ENCODE measurements at regions of chr22 and their contacts with region 1.

Region 1: DNA sequence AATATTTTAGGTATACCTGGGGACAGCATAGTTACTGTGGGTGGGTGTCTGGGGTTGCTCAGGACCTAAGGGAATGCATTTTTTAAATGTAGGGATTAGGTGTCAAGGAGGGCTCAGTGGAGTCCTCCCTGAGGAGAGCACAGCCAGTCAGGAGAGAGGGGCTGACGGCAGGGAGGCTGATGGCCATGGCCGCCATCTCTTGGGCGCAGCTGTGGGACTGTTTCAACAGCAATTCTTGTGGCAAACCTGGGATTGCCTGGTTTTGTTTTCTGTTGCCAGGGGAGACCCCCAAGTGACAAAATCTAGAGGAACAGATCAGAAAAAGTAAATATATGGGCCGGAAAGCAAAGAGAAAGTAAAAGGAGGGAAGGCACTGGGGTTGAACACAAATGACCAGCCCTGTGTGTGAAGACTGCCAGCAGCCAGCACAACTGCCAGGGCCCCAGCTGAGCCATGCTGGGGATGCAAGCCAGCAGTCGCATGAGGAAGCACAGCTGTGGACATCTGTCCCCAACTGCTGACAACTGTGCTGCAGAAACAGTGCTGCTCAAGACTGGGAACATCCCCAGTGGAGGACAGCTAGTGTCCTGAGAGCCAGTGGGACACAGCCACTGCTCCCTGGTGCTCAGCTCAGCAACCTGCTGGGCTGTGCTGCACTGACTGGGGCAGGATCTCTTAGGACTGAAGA is 10.5 kb downstream of the MIF start:
- DNase-seq: no peak
- H3K4me3 ChIP-seq: no peak overlapping the region
- H3K27ac ChIP-seq: no peak overlapping the region
- H3K4me1 ChIP-seq: peaks cover 17% of the 10 kb centered on the region
- H3K27me3 ChIP-seq: no peaks in the 10 kb centered on the region
- CTCF ChIP-seq: no peak

Region 2: DNA sequence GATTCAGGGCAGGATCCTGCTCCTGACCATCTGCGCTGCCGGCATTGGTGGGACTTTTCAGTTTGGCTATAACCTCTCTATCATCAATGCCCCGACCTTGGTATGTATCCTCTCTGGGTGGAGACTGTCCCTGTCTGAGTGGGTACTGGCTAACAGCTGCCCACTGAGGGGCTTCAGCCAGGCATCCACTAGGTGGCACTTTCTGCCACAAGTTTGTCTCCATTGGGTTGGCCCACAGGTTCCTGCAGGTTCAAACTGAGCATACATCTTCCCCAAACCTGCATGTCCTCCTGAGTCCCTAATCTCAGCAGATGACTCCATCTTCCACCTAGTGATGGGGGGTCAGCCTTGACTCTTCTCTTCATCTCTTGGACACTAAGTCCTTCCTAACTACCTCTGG is 42.6 kb before region 1 on chr22:
- CTCF ChIA-PET with region 1: no interaction called
- dilution Hi-C with region 1: no loop called
- in situ Hi-C with region 1: no loop called
- intact Hi-C with region 1: loop called (anchors 1 kb)
- DNase-seq: peak; percentile 28
- H3K4me3 ChIP-seq: no peak overlapping the region
- H3K27ac ChIP-seq: no peak overlapping the region
- H3K4me1 ChIP-seq: peaks cover 13% of the 10 kb centered on the region
- H3K27me3 ChIP-seq: no peaks in the 10 kb centered on the region
- CTCF ChIP-seq: peak; percentile 56 to 66

Region 3: DNA sequence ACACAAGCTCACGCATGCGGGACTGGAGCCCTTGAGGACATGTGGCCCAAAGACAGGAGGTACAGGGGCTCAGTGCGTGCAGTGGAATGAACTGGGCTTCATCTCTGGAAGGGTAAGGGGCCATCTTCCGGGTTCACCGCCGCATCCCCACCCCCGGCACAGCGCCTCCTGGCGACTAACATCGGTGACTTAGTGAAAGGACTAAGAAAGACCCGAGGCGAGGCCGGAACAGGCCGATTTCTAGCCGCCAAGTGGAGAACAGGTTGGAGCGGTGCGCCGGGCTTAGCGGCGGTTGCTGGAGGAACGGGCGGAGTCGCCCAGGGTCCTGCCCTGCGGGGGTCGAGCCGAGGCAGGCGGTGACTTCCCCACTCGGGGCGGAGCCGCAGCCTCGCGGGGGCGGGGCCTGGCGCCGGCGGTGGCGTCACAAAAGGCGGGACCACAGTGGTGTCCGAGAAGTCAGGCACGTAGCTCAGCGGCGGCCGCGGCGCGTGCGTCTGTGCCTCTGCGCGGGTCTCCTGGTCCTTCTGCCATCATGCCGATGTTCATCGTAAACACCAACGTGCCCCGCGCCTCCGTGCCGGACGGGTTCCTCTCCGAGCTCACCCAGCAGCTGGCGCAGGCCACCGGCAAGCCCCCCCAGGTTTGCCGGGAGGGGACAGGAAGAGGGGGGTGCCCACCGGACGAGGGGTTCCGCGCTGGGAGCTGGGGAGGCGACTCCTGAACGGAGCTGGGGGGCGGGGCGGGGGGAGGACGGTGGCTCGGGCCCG is 10.6 kb before region 1 on chr22 and contains the start of gene MIF:
- CTCF ChIA-PET with region 1: interaction called, 4 read pairs
- dilution Hi-C with region 1: no loop called
- in situ Hi-C with region 1: no loop called
- intact Hi-C with region 1: loop called (anchors 1 kb)
- DNase-seq: peak; percentile 95
- H3K4me3 ChIP-seq: peak within 1 kb of the TSS; percentile 79 to 93 (median 91)
- H3K27ac ChIP-seq: peak within 1 kb of the TSS; percentile 86
- H3K4me1 ChIP-seq: peaks cover 21% of the 10 kb centered on the region
- H3K27me3 ChIP-seq: no peaks in the 10 kb centered on the region
- CTCF ChIP-seq: peak; percentile 69 to 83
- total RNA-seq, gene MIF: 359 to 1,214 TPM

Region 4: DNA sequence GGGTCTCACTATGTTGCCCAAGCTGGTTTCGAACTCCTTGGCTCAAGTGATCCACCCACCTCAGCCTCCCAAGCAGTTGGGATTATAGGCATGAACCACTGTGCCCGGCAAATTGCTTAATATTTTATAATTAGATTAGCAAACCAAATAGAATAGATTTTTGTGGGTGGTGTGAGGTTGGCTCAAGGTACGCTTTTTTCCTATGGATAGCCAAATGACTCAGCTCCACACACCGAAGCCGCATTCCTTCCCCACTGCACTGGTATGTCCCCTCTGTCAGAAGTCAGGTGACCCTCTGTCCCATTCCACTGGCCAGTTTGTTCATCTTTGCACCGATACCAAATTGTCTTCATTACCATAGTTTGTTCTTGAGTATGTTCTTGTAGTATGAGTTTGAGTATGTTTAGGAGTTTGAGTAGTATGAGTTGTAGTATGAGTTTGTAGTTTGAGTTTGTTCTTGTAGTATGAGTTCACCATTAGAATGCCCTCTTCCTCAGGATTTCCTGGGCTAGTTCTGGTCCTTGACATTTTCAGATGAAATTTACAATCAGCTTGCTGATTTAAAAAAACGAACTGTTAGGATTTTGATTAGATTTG is 296.0 kb after region 1 on chr22:
- CTCF ChIA-PET with region 1: no interaction called
- dilution Hi-C with region 1: loop called (anchors 5 kb)
- in situ Hi-C with region 1: no loop called
- intact Hi-C with region 1: no loop called
- DNase-seq: peak; percentile 74
- H3K4me3 ChIP-seq: no peak overlapping the region
- H3K27ac ChIP-seq: peak overlapping the region; percentile 78
- H3K4me1 ChIP-seq: peaks cover 29% of the 10 kb centered on the region
- H3K27me3 ChIP-seq: no peaks in the 10 kb centered on the region
- CTCF ChIP-seq: no peak